ENCODE measurements at regions of chr15 and their contacts with region 1.

Region 1: GRCh38 chr15:44711356-44712107 is at the start of gene B2M:
- DNase-seq: peak; percentile 96
- H3K4me3 Mint-ChIP-seq: peak within 1 kb of the TSS; percentile 96
- H3K27ac Mint-ChIP-seq: peak within 1 kb of the TSS; percentile 99
- H3K4me1 Mint-ChIP-seq: peaks cover 42% of the 10 kb centered on the region
- H3K27me3 Mint-ChIP-seq: no peaks in the 10 kb centered on the region
- total RNA-seq, gene B2M: 9,253 to 11,726 TPM

Region 2: GRCh38 chr15:44676676-44677075 is 34.9 kb before region 1 on chr15:
- CTCF ChIA-PET with region 1: interaction called, 16 read pairs
- POLR2A ChIA-PET with region 1: interaction called, 34 read pairs
- DNase-seq: peak; percentile 42
- H3K4me3 Mint-ChIP-seq: peak overlapping the region; percentile 53
- H3K27ac Mint-ChIP-seq: peak overlapping the region; percentile 90
- H3K4me1 Mint-ChIP-seq: peaks cover 84% of the 10 kb centered on the region
- H3K27me3 Mint-ChIP-seq: no peaks in the 10 kb centered on the region

Region 3: DNA sequence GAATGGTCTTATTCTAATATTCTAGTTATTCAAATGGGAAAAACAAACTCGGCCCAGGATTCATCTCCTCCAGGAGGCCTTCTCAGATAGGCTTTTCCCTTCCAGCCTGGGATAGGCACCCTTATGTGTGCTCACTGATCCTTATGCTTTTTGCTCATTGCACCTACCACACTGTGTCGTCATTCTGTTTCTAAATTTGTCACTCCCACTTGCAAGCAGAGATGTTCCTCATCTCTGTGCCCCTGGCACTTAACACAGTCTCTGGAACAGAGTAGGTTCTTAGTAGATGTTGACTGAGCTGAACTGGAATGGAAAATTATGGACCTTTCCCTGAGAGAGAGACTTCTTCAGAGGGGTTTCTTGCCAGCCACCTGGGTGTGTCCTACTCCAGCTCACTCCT is 29.3 kb before region 1 on chr15:
- CTCF ChIA-PET with region 1: interaction called, 16 read pairs
- POLR2A ChIA-PET with region 1: interaction called, 34 read pairs
- DNase-seq: no peak
- H3K4me3 Mint-ChIP-seq: peak overlapping the region; percentile 65
- H3K27ac Mint-ChIP-seq: peak overlapping the region; percentile 92
- H3K4me1 Mint-ChIP-seq: peaks cover 86% of the 10 kb centered on the region
- H3K27me3 Mint-ChIP-seq: no peaks in the 10 kb centered on the region

Region 4: DNA sequence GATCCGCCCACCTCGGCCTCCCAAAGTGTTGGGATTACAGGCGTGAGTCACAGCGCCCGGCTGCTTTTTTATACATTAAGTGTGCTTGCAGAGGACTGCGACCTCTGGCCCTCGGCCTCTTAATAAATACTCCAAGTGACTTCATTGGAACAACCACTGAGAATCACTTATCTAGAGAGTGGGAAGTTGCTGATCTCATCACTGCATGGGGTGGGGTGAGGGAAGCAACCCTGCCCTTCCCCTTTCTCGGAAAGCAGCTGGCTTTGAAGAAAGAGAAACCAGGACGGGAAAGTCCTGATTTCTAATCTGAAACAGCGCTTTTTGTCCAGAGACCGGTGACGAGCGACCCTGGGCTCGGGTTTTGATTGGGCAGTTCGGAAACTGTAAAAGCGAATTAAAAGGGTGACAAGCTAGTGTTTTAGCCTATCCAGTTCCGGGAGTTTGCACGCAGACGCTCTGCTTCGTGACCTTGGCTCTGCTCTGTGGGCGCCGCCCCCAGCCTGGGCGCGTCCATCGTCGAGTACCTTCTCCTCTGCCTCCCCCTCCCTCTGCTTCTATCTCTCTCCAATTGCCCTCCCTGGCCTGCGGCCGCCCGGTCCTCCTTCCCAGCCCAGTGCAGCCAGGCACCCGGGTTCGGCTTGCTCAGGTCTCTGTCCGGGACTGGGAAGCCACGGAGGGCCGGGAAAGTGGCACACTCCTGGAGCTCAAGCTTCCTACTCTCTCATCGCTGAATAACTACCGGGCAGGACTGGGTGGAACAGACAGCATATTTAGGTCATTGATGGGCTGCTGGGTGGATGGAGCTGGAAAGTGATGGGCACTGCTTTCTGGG is 17.3 kb after region 1 on chr15:
- CTCF ChIA-PET with region 1: interaction called, 88 read pairs
- POLR2A ChIA-PET with region 1: interaction called, 182 read pairs
- DNase-seq: peak; percentile 98
- H3K4me3 Mint-ChIP-seq: peak overlapping the region; percentile 100
- H3K27ac Mint-ChIP-seq: peak overlapping the region; percentile 100
- H3K4me1 Mint-ChIP-seq: peaks cover 71% of the 10 kb centered on the region
- H3K27me3 Mint-ChIP-seq: no peaks in the 10 kb centered on the region

Measured in activated CD4-positive, alpha-beta T cell treated with anti-CD3 and anti-CD28 coated beads, Interleukin-2, amount 10 ng/mL, durations not matched to agents 7 days and 5 days (primary cell).